Endothelial cell of umbilical vein (primary cell): ENCODE measurements at regions of chr14 and their contacts with region 1.

Region 1: GRCh38 chr14:90301668-90302090 is 30.1 kb downstream of the NRDE2 start:
- DNase-seq: peak; percentile 76
- H3K4me3 ChIP-seq: no peak overlapping the region
- H3K27ac ChIP-seq: no peak overlapping the region
- H3K4me1 ChIP-seq: no peaks in the 10 kb centered on the region
- H3K27me3 ChIP-seq: no peaks in the 10 kb centered on the region
- CTCF ChIP-seq: peak; percentile 22 to 41
- POLR2A ChIP-seq: no peak

Region 2: DNA sequence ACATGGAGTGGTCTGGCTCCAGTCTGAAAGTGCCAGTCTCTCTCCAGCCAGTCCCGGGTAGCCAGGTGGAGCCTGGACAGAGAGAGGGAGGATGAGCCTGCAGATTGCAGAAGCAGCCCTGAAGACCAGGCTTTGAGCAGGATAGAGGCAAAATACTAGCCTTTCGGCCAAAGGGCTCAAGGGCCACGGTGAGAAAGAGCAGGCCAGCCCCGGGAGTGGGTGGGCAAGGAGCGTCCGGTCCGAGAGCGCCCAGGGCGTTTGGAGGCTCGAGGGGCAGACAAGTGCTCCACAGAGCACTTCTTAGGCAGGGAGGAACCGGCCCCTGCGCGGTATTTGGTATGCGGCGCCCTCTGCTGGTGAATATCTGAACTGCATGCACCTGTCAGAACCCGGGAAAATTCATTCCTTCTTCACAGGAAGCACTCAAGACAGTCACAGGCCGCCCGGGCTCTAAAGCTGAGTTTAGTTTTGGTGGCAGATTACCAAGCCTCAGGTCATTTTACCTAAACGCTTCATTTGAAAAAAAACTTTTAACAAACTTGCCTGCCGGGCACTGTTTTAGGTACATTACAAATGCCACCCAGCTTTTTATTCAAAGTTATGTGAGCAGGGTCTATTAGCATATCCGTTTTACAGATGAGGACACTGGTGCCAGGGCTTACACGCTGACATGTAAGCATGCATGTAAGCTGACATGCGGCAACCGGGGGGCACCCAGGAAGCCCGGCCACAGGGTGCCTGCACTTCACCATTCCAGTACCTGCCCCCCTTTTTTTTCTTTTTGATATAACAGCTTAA is 66.3 kb before region 1 on chr14:
- CTCF ChIA-PET with region 1: no interaction called
- POLR2A ChIA-PET with region 1: no interaction called
- dilution Hi-C with region 1: no loop called
- intact Hi-C with region 1: no loop called
- DNase-seq: peak; percentile 80
- H3K4me3 ChIP-seq: no peak overlapping the region
- H3K27ac ChIP-seq: no peak overlapping the region
- H3K4me1 ChIP-seq: no peaks in the 10 kb centered on the region
- H3K27me3 ChIP-seq: peaks cover 3 to 4% of the 10 kb centered on the region in 2 experiments
- CTCF ChIP-seq: peak; percentile 84 to 89
- POLR2A ChIP-seq: no peak

Region 3: GRCh38 chr14:90288651-90289355 is 12.9 kb before region 1 on chr14:
- CTCF ChIA-PET with region 1: interaction called, 24 read pairs
- POLR2A ChIA-PET with region 1: no interaction called
- dilution Hi-C with region 1: no loop called
- intact Hi-C with region 1: no loop called
- DNase-seq: peak; percentile 68
- H3K4me3 ChIP-seq: no peak overlapping the region
- H3K27ac ChIP-seq: no peak overlapping the region
- H3K4me1 ChIP-seq: peaks cover 5% of the 10 kb centered on the region
- H3K27me3 ChIP-seq: no peaks in the 10 kb centered on the region
- CTCF ChIP-seq: no peak
- POLR2A ChIP-seq: no peak

Region 4: GRCh38 chr14:90383075-90383730 is 81.5 kb after region 1 on chr14:
- CTCF ChIA-PET with region 1: interaction called, 6 read pairs
- POLR2A ChIA-PET with region 1: no interaction called
- dilution Hi-C with region 1: no loop called
- intact Hi-C with region 1: loop called (anchors 5 kb)
- DNase-seq: peak; percentile 100
- H3K4me3 ChIP-seq: peak overlapping the region; percentile 47 to 70 (median 58)
- H3K27ac ChIP-seq: peak overlapping the region; percentile 97
- H3K4me1 ChIP-seq: peaks cover 17% of the 10 kb centered on the region
- H3K27me3 ChIP-seq: peaks cover 0 to 2% of the 10 kb centered on the region in 2 experiments
- CTCF ChIP-seq: no peak
- POLR2A ChIP-seq: peak; percentile 77

Region 5: GRCh38 chr14:90518941-90519256 is 217.2 kb after region 1 on chr14:
- CTCF ChIA-PET with region 1: interaction called, 15 read pairs
- POLR2A ChIA-PET with region 1: no interaction called
- dilution Hi-C with region 1: no loop called
- intact Hi-C with region 1: loop called (anchors 1 kb)
- DNase-seq: peak; percentile 44
- H3K4me3 ChIP-seq: no peak overlapping the region
- H3K27ac ChIP-seq: no peak overlapping the region
- H3K4me1 ChIP-seq: no peaks in the 10 kb centered on the region
- H3K27me3 ChIP-seq: no peaks in the 10 kb centered on the region
- CTCF ChIP-seq: peak; percentile 58 to 75
- POLR2A ChIP-seq: no peak

Region 6: GRCh38 chr14:90815822-90816700 is 514.4 kb after region 1 on chr14 and contains the start of gene TTC7B:
- CTCF ChIA-PET with region 1: interaction called, 7 read pairs
- POLR2A ChIA-PET with region 1: no interaction called
- dilution Hi-C with region 1: no loop called
- intact Hi-C with region 1: loop called (anchors 5 kb)
- DNase-seq: no peak
- H3K4me3 ChIP-seq: peak within 1 kb of the TSS; percentile 70 to 95 (median 94)
- H3K27ac ChIP-seq: peak within 1 kb of the TSS; percentile 41
- H3K4me1 ChIP-seq: peaks cover 9% of the 10 kb centered on the region
- H3K27me3 ChIP-seq: no peaks in the 10 kb centered on the region
- CTCF ChIP-seq: peak in 1 of 2 donors; percentile 47
- POLR2A ChIP-seq: no peak
- total RNA-seq, gene TTC7B: 76.5 and 86.4 TPM in 2 replicates